Posterior vena cava (tissue), 2 donors: ENCODE measurements at regions of chr19 and their contacts with region 1.

Region 1: DNA sequence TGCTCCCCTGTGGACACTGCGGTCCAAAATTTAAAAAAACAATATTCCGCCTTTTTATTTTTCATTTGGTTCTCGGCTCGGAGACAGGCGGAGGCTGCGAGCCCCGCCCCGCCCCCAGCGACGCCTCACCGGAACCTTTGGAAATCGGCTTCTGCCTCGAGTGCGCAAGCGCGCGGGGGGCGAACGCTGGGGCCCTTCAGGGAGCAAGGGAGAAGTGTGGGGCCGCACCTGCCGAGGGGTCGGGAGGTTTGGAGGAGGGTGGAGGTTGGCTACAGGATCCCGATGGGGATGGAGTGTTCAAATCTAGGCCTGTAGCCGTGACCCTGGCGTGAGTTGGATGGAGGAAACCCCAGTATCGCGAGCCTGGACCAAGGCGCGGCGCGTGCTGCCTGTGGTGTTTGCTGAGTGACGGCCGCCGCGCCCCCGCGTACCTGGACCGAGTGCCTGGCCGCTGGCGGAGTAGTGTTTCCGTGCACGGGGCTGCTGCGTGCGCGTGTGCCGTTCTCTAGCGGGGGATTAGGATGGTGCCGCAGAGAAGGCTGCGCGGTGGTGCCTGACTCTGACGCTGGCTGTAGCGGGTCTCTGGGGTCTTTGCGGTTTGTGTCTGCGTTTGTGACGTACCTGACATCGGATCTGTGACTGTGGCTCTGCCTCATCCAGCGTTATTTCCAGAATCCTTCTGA is 565 bp upstream of the ZFP30 start:
- DNase-seq: peak; percentile 93

Region 2: GRCh38 chr19:37635076-37636056 is 20.5 kb before region 1 on chr19:
- intact Hi-C with region 1: no loop called
- DNase-seq: no peak

Region 3: DNA sequence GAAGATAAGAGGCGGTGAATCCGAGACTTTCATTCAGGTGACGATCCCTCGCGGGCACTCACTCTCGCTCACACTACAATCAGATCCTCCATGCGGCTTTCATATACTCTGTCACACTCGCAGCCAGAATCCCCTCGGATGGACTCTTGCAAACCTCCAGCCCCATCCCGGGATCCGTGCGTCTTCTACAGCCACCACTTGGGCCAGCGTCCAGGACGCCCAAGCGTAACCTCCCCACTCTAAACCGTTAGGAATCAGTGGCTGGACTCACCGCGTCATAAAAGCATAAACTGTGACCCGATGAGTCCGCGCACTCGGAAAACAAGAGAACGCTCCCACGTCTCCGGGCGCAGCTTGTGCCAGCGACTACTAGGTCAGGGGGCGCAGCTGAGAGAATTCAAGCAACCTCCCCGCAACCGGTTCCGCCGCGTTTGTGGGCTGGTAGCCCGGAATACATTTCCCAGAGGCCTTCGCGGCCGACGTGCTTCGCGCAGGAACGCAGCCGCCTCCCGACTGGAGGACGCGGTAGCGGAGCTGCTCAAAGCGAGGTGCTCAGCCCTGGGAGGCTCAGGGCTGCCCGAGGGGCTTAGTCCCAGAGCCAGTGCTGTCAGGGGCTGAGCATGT is 36.2 kb after region 1 on chr19:
- intact Hi-C with region 1: loop called in 1 of 2 experiments (anchors 1 kb)
- DNase-seq: peak; percentile 95